HAP-1 (cell line): ENCODE measurements at regions of chr18 and their contacts with region 1.

Region 1: GRCh38 chr18:62584241-62585120 is 61.7 kb downstream of the ZCCHC2 start:
- DNase-seq: peak; percentile 90 to 93
- H3K4me3 ChIP-seq: no peak overlapping the region
- H3K4me1 ChIP-seq: peaks cover 3% of the 10 kb centered on the region; the same call in 1 of the 2 replicates
- H3K27me3 ChIP-seq: no peaks in the 10 kb centered on the region

Region 2: DNA sequence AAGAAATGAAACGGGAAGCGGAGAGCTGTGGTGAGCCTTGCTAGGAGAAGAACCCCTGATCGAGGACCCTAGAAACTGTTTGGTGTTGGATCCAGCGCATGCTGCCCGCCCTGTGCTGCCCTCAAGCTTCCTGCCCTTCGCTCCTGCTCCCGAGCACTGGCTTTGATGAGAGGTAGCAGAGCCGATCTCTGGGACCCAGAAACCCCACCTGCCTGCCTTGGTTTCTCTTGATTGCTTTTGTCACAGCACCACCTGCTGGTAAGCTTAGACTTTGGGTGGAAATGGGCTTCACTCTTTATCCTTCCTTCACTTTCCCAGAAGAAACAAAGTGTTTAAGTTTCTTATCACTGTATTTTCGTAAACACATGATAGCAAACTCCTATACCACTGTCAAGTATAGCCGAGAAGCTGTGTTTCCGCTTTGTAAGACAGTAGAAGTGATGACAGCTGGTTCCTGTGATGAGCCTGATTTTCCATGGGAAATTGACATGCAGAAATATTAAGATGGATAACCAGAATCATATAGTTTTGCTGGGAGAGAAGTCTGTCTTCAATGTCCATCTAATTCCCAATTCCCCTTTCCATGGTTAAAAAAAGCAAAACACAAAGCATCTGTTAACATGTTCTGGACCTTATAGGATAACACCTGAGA is 398.2 kb after region 1 on chr18:
- in situ Hi-C with region 1: loop called (anchors 5 kb)
- DNase-seq: peak; percentile 69 to 82
- H3K4me3 ChIP-seq: no peak overlapping the region
- H3K4me1 ChIP-seq: no peaks in the 10 kb centered on the region; the same call in none of the 2 replicates
- H3K27me3 ChIP-seq: no peaks in the 10 kb centered on the region